HEK293T (cell line): ENCODE measurements at regions of chr4 and their contacts with region 1.

Region 1: GRCh38 chr4:168486961-168487305 is 6.6 kb upstream of the DDX60L start:
- DNase-seq: no peak

Region 2: DNA sequence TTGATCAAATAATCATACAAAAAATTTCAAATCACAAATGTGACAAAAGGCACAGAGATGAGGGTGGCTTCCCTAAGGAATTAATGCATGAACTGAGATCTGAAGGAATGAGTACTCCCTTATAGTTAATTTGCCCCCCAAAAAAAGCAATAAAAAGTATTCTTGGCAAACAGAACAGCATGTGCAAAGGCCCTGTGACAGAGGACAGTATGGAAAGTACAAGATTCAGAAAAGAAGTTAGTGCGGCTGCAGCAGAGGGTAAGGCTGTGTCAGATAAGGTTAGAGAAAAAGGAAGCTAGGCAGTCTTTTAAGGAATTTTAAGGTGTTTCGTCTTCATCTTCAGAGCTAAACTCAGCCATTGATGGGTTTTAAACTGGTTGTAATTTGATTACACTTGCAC is 14.0 kb before region 1 on chr4:
- CTCF ChIA-PET with region 1: no interaction called
- POLR2A ChIA-PET with region 1: no interaction called
- DNase-seq: no peak

Region 3: GRCh38 chr4:168514249-168514852 is 27.4 kb after region 1 on chr4:
- CTCF ChIA-PET with region 1: interaction called, 11 read pairs
- POLR2A ChIA-PET with region 1: no interaction called
- DNase-seq: no peak